ENCODE measurements at regions of chr11 and their contacts with region 1.

Region 1: GRCh38 chr11:108069947-108070346 is 51.4 kb upstream of the ACAT1 start:
- DNase-seq: no peak
- H3K4me3 Mint-ChIP-seq: peak overlapping the region; percentile 50
- H3K27ac Mint-ChIP-seq: peak overlapping the region; percentile 87
- H3K4me1 Mint-ChIP-seq: peaks cover 22% of the 10 kb centered on the region
- H3K27me3 Mint-ChIP-seq: no peaks in the 10 kb centered on the region

Region 2: GRCh38 chr11:108302121-108302785 is 232.3 kb after region 1 on chr11:
- CTCF ChIA-PET with region 1: no interaction called
- POLR2A ChIA-PET with region 1: no interaction called
- DNase-seq: no peak
- H3K4me3 Mint-ChIP-seq: no peak overlapping the region
- H3K27ac Mint-ChIP-seq: no peak overlapping the region
- H3K4me1 Mint-ChIP-seq: peaks cover 14% of the 10 kb centered on the region
- H3K27me3 Mint-ChIP-seq: no peaks in the 10 kb centered on the region

Region 3: DNA sequence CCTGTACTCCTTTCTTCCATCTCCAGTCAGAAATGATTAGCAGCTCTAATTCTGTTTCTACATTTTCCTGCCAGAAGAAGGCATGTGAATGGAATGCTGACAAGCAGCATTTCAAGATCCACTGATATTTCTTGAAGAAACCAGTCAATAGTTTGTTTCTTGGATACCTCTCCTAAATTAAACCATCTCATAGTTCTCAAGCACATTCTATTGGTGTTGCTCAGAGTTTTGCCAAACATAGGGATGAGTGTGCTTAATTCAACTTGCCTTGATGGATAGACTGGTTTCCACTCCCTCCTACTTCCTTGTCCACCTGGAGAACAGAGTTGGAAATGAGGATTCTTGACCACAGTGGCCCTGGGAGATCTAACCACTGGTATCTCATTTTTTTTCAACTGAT is 565.1 kb after region 1 on chr11:
- CTCF ChIA-PET with region 1: interaction called, 4 read pairs
- POLR2A ChIA-PET with region 1: interaction called, 11 read pairs
- DNase-seq: no peak
- H3K4me3 Mint-ChIP-seq: no peak overlapping the region
- H3K27ac Mint-ChIP-seq: no peak overlapping the region
- H3K4me1 Mint-ChIP-seq: no peaks in the 10 kb centered on the region
- H3K27me3 Mint-ChIP-seq: peaks cover 23% of the 10 kb centered on the region

Measured in activated CD4-positive, alpha-beta T cell treated with anti-CD3 and anti-CD28 coated beads, Interleukin-2, amount 10 ng/mL, durations not matched to agents 7 days and 5 days (primary cell).